ENCODE measurements at regions of chr3 and their contacts with region 1.

Region 1: GRCh38 chr3:61559136-61559731 is 2.1 kb upstream of the PTPRG start:
- DNase-seq: no peak
- H3K4me3 ChIP-seq: peak overlapping the region in 2 of 3 donors; percentile 85
- H3K27ac ChIP-seq: peak overlapping the region; percentile 88 to 91
- H3K4me1 ChIP-seq: no peaks in the 10 kb centered on the region
- H3K27me3 ChIP-seq: no peaks in the 10 kb centered on the region
- CTCF ChIP-seq: no peak
- POLR2A ChIP-seq: no peak

Region 2: DNA sequence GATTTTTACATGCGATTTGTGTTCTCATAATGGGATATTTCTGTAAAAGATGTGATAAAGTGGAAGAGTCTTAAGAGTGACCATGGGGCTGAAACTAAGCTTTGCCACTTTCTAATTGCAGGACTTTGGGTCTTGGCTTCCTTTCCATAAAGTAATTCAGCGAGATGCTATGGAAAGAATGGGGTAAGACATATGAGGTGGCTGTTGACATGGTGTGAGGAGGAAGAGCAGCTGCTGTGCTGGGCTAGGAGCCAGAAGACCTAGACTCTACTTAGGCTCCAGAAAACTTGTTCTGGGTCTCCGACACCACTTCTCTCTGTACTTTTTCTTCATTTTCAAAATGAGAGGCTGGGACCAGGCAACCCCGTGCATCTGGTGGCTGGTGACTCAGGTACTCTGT is 1854.9 kb before region 1 on chr3:
- intact Hi-C with region 1: loop called (anchors 5 kb)
- DNase-seq: no peak
- H3K4me3 ChIP-seq: no peak overlapping the region
- H3K27ac ChIP-seq: no peak overlapping the region
- H3K4me1 ChIP-seq: no peaks in the 10 kb centered on the region
- H3K27me3 ChIP-seq: no peaks in the 10 kb centered on the region
- CTCF ChIP-seq: no peak
- POLR2A ChIP-seq: no peak

Region 3: GRCh38 chr3:61761694-61762430 is 202.6 kb after region 1 on chr3:
- intact Hi-C with region 1: no loop called
- DNase-seq: no peak
- H3K4me3 ChIP-seq: no peak overlapping the region
- H3K27ac ChIP-seq: no peak overlapping the region
- H3K4me1 ChIP-seq: no peaks in the 10 kb centered on the region
- H3K27me3 ChIP-seq: no peaks in the 10 kb centered on the region
- CTCF ChIP-seq: no peak
- POLR2A ChIP-seq: no peak